ENCODE measurements at regions of chr11 and their contacts with region 1.

Region 1: DNA sequence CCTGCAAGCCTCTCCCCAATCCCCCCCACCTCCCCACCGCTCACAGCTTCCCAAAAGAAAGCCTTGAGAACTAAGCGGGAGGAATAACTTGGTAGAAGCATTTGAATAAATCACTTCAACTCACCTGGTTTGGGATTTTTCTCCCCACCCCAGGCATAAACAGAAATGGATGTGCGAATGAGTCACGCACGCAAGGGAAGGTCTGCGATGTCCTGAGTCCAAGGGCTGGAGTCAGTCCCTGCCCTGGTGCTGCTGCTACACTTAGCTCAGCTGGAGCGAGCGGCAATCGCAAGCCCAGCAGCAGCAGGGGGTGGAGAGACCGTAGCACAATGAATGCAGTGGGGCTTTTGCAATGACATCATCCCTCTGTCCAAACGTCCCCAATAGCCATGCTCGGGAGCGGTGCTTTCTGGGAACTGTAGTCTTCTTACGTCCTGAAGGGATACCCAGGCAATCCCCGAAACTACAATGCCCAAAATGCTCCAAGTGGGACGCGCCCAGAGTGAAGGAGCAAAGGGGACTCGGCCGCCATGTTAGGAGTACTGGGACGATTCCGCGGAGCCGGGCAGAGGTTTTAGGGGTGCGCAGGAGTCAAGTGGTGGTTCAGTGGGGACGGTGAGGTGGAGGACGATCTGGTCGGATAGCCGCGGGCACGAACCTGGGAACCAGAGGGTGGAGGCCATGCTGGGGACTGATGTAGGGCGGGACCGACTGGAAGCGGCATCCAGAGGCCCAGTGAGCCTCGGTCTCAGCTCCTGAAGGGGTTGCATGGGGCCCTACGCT is at the start of gene RAB30:
- DNase-seq: peak; percentile 97
- H3K4me3 Mint-ChIP-seq: no peak within 1 kb of the TSS
- H3K27ac Mint-ChIP-seq: no peak within 1 kb of the TSS
- H3K4me1 Mint-ChIP-seq: peaks cover 54% of the 10 kb centered on the region
- H3K27me3 Mint-ChIP-seq: no peaks in the 10 kb centered on the region
- total RNA-seq, gene RAB30: 8.8 to 11.1 TPM

Region 2: DNA sequence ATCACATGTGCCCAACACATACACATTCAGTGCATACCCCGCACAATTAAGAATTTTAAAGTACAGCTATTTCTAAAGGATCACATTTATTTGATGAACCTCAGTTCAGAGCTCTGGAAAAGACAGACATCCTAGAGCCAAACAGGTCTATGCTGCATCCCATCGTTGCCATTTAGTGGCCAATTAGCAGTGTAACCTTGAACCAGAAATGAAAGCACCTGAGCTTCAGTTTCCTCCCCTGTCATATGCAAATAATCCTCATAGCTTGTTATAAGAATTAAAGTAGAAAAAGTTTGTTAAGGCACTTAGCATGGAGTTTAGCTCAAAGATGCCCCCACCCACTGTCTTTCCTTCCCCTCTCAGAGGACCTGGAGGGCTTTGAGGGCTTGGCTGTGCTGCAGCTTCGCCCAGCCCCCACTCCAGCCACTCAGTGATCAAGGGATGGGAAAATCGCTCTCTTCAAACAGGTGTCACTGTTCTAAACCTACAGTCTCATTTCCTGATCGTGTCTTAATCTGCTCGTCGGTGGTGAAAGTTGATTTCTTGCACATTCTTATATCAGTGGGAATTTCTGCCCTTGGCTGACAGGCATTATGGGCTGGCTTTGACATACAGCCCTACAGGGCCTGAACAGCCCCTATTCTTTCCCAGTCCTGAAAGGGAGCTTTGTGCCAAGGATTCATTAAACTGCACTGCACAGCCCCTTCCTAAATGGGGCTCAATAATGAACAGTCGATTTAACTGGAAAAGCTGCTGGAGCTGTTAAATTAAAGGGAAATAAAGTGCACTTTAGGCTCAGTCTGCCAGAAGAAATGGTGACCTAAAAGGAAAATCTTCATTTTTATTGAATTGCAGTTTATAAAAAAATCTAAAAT is 314.8 kb before region 1 on chr11:
- CTCF ChIA-PET with region 1: no interaction called
- intact Hi-C with region 1: loop called (anchors 5 kb)
- DNase-seq: peak; percentile 21
- H3K4me3 Mint-ChIP-seq: peak overlapping the region; percentile 19
- H3K27ac Mint-ChIP-seq: no peak overlapping the region
- H3K4me1 Mint-ChIP-seq: peaks cover 26% of the 10 kb centered on the region
- H3K27me3 Mint-ChIP-seq: no peaks in the 10 kb centered on the region

Region 3: DNA sequence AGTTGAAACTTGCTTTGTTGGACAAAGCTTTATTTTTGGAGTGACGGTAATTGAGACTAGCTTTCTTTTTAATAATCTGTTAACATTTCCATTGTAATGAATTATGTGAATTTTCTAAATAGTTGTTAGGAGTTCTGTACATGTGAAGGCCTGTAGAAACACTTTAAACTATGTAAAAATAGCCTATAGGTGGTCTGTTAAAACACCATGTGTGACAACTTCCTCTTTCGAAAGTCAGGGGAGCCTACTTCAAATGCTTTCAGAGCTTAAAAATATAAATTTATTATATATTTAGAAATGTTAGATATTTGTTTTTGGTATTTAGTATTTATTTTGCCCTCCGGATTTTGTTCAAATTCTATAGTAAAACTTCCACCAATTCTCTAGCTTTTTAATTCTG is 141.5 kb before region 1 on chr11:
- CTCF ChIA-PET with region 1: no interaction called
- intact Hi-C with region 1: no loop called
- DNase-seq: no peak
- H3K4me3 Mint-ChIP-seq: no peak overlapping the region
- H3K27ac Mint-ChIP-seq: no peak overlapping the region
- H3K4me1 Mint-ChIP-seq: peaks cover 38% of the 10 kb centered on the region
- H3K27me3 Mint-ChIP-seq: no peaks in the 10 kb centered on the region

Region 4: DNA sequence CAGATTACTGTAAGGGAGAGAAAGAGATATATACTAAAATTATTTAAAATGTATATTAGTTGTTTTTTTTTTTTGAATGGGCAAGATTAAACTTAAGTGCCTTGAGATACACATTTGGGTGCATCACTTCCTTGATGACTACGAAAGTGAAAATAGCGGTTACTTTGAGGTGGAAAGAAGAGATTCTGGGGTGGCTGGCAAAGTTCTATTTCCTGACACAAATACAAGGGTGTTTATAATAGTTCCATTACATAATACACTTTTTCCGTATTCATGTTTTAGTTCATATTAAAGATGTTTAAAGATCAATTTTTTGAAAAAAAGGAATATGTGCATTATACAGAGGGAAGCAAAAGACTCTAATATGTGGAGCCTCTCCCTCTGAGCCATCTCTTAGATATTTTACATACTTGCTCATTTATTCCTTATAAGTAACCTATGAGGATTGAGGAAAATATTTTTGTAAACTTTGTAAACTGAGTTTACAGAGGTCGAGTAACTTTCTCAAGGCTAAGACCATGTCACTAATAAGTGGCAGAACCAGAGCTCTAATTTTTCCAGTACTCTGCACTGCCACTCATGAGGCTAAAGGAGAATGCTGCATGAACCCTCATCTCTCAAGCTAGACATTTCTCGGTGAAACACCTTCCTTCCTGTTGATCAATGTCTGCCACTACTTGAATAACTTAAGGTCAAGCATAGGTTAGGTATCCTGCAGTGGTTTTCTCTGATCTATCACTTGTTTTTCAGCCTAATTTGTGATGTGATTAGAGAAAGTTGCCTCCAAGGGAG is 111.6 kb before region 1 on chr11:
- CTCF ChIA-PET with region 1: interaction called, 4 read pairs
- intact Hi-C with region 1: loop called (anchors 1 kb)
- DNase-seq: peak; percentile 55
- H3K4me3 Mint-ChIP-seq: peak overlapping the region; percentile 21
- H3K27ac Mint-ChIP-seq: peak overlapping the region; percentile 68
- H3K4me1 Mint-ChIP-seq: peaks cover 82% of the 10 kb centered on the region
- H3K27me3 Mint-ChIP-seq: no peaks in the 10 kb centered on the region

Region 5: DNA sequence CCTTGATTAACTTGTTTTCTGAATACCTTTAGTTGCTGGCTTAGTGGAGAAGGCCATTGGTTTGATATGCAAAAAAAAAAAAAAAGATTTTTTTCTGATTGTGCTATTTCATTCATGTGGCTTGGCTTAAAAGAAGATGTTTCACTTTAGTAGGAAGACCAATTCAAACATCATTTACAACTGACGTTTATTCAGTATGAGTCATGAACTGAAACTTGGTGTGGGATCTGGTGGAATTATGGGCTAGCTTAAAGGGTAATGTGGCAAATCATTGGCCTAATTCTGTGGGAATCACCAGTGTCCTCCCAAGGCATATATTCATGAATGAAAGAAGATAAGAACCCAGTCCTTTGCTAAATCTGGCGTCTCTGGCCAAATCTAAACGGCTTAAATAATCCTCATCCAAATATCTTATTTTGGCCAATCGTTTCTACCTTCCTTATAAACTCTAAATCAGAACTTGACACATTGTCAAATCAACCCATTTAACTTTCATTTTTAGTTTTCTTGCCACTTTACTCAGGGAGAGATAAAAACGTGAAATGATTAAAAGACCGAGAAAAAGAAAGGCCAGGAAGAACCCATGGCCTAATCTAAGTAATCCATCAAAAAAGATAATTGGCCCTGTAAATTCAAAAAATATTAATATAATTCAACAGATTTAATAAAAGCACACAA is 93.2 kb before region 1 on chr11:
- CTCF ChIA-PET with region 1: no interaction called
- intact Hi-C with region 1: loop called (anchors 1 kb)
- DNase-seq: no peak
- H3K4me3 Mint-ChIP-seq: peak overlapping the region; percentile 0
- H3K27ac Mint-ChIP-seq: peak overlapping the region; percentile 33
- H3K4me1 Mint-ChIP-seq: peaks cover 51% of the 10 kb centered on the region
- H3K27me3 Mint-ChIP-seq: no peaks in the 10 kb centered on the region

Region 6: DNA sequence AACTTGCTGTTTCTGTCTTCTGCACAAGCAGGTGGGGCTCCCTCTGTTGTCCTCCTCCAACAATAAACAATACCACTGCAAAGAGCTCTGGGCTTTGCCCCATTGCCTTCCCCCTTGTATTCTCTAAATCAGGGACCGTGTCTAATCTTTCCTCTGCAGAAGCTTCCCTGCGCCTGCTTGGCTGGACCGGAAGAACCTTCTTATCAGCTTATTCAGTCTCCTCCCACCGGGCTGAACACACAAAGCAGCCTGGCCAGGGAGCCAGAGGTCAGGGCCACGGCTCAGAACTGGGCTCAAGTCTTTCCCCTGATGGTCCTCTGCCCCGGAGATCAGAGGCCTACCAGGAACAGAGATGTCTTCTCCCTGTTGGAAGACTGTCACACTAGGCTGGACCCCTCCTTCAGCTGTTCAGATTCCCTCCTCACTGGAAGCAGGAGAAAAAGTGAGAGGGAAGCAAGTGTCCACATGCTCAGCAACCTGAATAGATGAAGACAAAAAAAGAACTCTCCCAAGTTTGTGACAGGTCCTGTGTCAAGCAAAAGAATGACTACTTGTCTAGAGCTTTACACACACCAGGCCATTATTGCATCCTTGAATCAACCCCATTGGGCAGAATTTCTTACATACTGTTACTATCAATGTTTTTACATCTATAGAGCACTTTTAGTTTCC is 63.7 kb before region 1 on chr11:
- CTCF ChIA-PET with region 1: no interaction called
- intact Hi-C with region 1: loop called (anchors 2 kb)
- DNase-seq: no peak
- H3K4me3 Mint-ChIP-seq: no peak overlapping the region
- H3K27ac Mint-ChIP-seq: no peak overlapping the region
- H3K4me1 Mint-ChIP-seq: peaks cover 50% of the 10 kb centered on the region
- H3K27me3 Mint-ChIP-seq: no peaks in the 10 kb centered on the region

Region 7: DNA sequence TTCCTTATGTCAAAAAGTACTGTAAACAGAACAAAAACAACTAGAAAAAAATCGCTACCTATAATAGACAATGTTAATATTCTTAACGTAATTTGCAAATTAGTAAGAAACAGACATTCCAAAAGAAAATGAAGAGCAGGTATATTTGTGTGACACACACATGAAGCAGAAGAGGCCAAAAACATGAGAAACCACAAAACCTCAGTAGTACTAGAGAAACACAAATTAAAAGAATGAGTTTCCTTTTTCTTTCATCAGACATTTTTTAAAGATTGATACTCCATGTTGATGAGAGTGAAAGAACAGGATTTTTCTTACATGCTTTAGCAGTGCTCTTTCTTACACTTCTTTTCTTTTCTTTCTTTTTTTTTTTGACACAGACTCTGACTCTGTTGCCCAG is 51.0 kb after region 1 on chr11:
- CTCF ChIA-PET with region 1: no interaction called
- intact Hi-C with region 1: loop called (anchors 1 kb)
- DNase-seq: no peak
- H3K4me3 Mint-ChIP-seq: no peak overlapping the region
- H3K27ac Mint-ChIP-seq: no peak overlapping the region
- H3K4me1 Mint-ChIP-seq: peaks cover 50% of the 10 kb centered on the region
- H3K27me3 Mint-ChIP-seq: no peaks in the 10 kb centered on the region

Region 8: DNA sequence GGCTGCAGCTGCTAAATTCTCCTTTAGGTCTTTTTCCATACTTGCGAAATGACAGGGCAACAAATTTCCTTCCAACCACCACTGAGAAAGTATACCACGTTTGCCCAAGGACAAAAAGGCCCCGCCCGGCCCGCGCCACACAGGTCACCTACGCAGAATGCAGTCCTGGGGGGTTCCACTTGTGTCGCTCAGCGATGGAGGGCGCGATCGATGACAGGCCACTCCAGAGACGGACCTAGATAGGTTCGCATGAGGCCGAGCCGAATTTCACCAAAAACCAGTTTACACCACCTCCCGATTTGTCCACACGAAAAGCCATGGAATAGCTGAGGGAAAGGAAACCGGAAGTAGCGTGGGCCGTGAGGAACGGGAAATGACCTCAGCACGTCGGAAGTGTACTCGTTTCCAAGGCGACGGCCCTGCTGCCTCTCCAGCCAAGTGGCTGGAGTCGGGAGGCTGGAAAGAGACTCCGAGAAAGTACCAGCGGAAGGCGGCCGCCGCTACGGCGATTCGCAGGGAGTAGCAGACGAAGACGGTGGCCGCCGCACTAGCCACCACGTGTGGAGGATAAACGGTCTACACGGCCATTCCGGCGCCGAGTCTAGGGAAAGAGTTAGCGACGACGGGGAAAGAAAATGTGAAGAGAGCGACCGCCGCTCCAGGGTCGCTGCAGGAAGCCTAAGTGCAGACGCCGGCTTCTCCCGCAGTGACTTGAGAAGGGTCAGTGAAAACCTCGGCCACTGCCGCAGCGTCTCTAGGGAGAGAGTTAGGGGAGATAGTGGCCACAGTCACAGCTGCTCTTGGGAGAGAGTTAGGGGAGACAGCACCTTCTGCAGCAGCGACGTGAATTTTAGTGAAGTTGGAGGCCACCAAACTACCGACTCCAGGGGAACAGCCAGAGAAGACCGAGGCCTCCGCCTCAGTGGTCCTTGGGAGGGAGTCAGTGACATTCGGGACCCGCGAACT is 121.8 kb after region 1 on chr11 and contains the start of gene ANKRD42:
- CTCF ChIA-PET with region 1: no interaction called
- intact Hi-C with region 1: loop called (anchors 1 kb)
- DNase-seq: peak; percentile 90
- H3K4me3 Mint-ChIP-seq: peak within 1 kb of the TSS; percentile 95
- H3K27ac Mint-ChIP-seq: peak within 1 kb of the TSS; percentile 95
- H3K4me1 Mint-ChIP-seq: peaks cover 44% of the 10 kb centered on the region
- H3K27me3 Mint-ChIP-seq: no peaks in the 10 kb centered on the region
- total RNA-seq, gene ANKRD42: 2.3 to 2.7 TPM